IMR-90 (cell line): ENCODE measurements at regions of chr2 and their contacts with region 1.

Region 1: GRCh38 chr2:58851598-58851997 is 610.5 kb upstream of the FANCL start:
- DNase-seq: no peak
- ATAC-seq: no peak
- H3K4me3 ChIP-seq: no peak overlapping the region
- H3K27ac ChIP-seq: no peak overlapping the region
- H3K4me1 ChIP-seq: no peaks in the 10 kb centered on the region
- H3K27me3 ChIP-seq: no peaks in the 10 kb centered on the region
- CTCF ChIP-seq: peak; percentile 31
- POLR2A ChIP-seq: no peak
- RAD21 ChIP-seq: peak; percentile 49

Region 2: DNA sequence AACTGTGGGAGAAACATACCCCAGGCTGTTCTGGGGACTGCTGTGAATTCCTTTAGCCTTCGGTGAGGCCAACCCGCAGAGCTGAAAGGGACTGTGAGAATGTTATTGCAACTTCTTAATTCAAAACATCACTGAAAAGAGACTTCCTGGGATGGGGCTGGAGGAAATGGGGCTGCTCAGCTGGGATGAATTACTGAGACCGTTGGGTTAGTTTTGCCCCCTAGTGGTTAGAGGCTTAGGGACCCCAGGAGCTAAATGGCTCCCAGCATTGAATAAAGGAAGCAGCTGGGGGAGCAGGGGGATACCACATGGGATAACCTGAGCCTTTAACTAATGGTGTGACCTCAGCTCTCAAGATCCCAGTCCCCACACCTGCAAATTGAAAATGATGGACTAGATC is 330.7 kb after region 1 on chr2:
- CTCF ChIA-PET with region 1: no interaction called
- POLR2A ChIA-PET with region 1: no interaction called
- dilution Hi-C with region 1: no loop called
- in situ Hi-C with region 1: no loop called
- intact Hi-C with region 1: loop called (anchors 5 kb)
- DNase-seq: peak; percentile 15
- ATAC-seq: 0 out of 2 replicates have a peak, but pooled peaks have one; percentile 32
- H3K4me3 ChIP-seq: no peak overlapping the region
- H3K27ac ChIP-seq: no peak overlapping the region
- H3K4me1 ChIP-seq: no peaks in the 10 kb centered on the region
- H3K27me3 ChIP-seq: no peaks in the 10 kb centered on the region
- CTCF ChIP-seq: peak; percentile 52
- POLR2A ChIP-seq: no peak
- RAD21 ChIP-seq: peak; percentile 47